Psoas muscle (tissue), 8 donors: ENCODE measurements at regions of chr10 and their contacts with region 1.

Region 1: GRCh38 chr10:72331601-72332422 is 22.9 kb downstream of the DNAJB12 start:
- DNase-seq: peak; percentile 87 to 91
- ATAC-seq: peak; percentile 42 to 56 (median 52)
- H3K4me3 ChIP-seq: peak overlapping the region; percentile 9
- H3K27ac ChIP-seq: peak overlapping the region; percentile 96
- H3K4me1 ChIP-seq: peaks cover 69% of the 10 kb centered on the region
- H3K27me3 ChIP-seq: no peaks in the 10 kb centered on the region
- CTCF ChIP-seq: peak; percentile 19

Region 2: DNA sequence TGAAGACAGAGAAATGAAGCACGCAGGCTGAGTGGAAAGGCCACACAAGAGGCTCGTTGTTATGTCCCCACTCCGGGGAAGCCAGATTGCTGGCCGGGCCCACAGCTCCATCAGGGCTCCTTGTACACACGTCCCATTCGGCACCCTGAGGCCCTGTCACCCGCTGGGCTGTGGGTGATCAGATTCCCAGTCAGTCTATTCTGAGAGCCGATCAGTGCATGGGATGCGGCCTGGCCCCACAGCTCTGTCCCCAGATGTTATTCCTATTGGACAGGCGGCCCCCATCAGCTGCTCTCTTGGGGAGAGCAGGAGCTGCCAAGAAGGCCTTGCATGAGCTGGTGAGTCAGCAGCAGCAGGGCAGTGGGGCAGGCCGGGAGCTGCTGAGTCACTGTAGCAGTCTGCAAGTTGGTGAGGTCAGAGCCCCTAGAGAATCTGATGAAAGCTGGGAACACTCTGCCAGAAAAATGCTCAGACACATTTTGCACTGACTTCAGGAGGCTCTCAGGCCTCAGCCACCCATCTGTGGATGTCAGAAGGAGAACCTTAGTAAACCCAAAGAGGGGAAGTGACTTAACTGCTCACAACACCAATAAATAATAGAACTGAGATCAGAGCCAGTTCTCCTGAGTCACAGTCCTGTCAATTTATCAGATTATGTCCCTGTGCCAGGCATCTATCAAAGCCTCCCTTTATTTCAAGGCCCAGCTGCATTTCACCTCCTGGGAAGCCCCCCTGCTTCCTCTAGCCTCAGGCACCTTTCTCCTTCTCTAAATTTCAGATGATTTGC is 471.4 kb before region 1 on chr10:
- intact Hi-C with region 1: no loop called
- DNase-seq: peak; percentile 96 to 98
- ATAC-seq: peak; percentile 94 to 97 (median 96)
- H3K4me3 ChIP-seq: peak overlapping the region; percentile 17
- H3K27ac ChIP-seq: peak overlapping the region; percentile 98
- H3K4me1 ChIP-seq: peaks cover 42% of the 10 kb centered on the region
- H3K27me3 ChIP-seq: no peaks in the 10 kb centered on the region
- CTCF ChIP-seq: no peak

Region 3: GRCh38 chr10:71957546-71958275 is 374.1 kb before region 1 on chr10:
- intact Hi-C with region 1: loop called (anchors 5 to 10 kb)
- DNase-seq: no peak
- ATAC-seq: no peak
- H3K4me3 ChIP-seq: no peak overlapping the region
- H3K27ac ChIP-seq: no peak overlapping the region
- H3K4me1 ChIP-seq: peaks cover 10% of the 10 kb centered on the region
- H3K27me3 ChIP-seq: no peaks in the 10 kb centered on the region
- CTCF ChIP-seq: no peak

Region 4: GRCh38 chr10:72126184-72126871 is 205.5 kb before region 1 on chr10:
- intact Hi-C with region 1: loop called (anchors 5 kb)
- DNase-seq: no peak
- ATAC-seq: peak in 1 of 4 donors; percentile 57
- H3K4me3 ChIP-seq: no peak overlapping the region
- H3K27ac ChIP-seq: no peak overlapping the region
- H3K4me1 ChIP-seq: no peaks in the 10 kb centered on the region
- H3K27me3 ChIP-seq: no peaks in the 10 kb centered on the region
- CTCF ChIP-seq: peak; percentile 45

Region 5: DNA sequence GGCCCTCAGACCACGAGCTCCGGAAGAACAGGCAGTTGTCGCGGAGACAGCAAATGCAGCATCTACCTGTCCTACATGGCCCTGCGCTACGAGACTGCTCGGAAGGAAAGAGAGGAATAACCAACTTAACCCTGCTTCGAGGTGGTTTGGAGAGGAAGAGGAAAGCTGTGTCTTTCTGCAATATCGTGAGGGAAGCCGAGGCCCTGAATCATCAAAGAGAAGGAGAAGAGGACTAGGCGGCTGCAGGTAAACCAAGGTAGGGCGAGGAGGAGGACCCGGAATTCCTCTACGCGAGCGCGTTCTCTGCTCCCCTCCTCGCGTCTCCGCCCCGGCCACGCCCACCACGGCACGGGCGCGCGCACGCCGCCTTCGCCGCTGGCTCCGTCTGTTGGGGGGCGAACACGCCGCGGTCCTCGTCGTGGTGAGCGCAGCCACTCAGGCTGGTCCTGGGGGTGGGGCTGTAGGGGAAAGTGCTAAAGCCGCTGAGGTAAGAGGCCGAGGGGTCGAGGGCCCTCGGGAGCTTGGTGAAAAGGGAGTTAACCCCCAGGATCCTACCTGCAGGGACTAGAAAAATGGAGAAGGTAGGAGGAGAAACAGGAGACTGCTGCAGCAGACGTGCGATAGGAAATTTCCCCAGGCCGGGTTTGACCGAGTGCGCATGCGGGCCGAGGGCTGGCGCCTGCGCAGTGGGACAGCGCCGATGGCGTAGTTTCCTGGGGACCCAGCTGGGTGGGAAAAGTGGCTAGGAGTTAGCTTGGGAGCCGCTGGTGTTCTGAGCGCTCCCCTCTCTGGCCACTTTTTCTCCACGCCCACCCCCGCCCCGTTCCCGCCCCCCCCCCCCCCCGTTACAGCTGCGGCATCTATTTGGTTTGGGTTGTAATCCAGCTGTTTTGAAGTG is 115.9 kb before region 1 on chr10 and contains the starts of genes ANAPC16 and ASCC1:
- intact Hi-C with region 1: loop called (anchors 5 kb)
- DNase-seq: peak; percentile 92 to 96
- ATAC-seq: peak; percentile 96 to 98 (median 98)
- H3K4me3 ChIP-seq: peak within 1 kb of the TSS; percentile 78
- H3K27ac ChIP-seq: peak within 1 kb of the TSS; percentile 97
- H3K4me1 ChIP-seq: peaks cover 50% of the 10 kb centered on the region
- H3K27me3 ChIP-seq: no peaks in the 10 kb centered on the region
- CTCF ChIP-seq: no peak
- total RNA-seq, gene ANAPC16: 80.3 to 144 (median 119) TPM
- total RNA-seq, gene ASCC1: 15.3 to 22.4 (median 19.4) TPM

Region 6: DNA sequence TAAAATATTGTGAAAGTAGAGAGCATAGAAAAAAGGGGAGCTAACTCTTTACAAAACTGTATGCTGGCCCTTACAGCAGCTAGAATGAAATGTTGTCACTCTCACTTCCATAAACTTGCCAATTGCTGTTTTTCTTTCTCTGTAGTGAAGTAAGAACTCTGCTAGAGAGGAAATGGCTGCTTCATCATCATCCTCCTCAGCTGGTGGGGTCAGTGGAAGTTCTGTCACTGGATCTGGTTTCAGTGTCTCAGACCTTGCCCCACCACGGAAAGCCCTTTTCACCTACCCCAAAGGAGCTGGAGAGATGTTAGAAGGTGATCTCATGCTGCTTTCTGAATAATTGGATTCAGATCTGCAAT is 108.1 kb before region 1 on chr10:
- intact Hi-C with region 1: loop called (anchors 5 kb)
- DNase-seq: no peak
- ATAC-seq: peak in 3 of 4 donors; percentile 50 to 55 (median 54)
- H3K4me3 ChIP-seq: no peak overlapping the region
- H3K27ac ChIP-seq: peak overlapping the region; percentile 97
- H3K4me1 ChIP-seq: peaks cover 64% of the 10 kb centered on the region
- H3K27me3 ChIP-seq: no peaks in the 10 kb centered on the region
- CTCF ChIP-seq: no peak